ENCODE measurements at regions of chr7 and their contacts with region 1.

Region 1: GRCh38 chr7:91832493-91833045 is 47.9 kb downstream of the MTERF1 start:
- DNase-seq: no peak
- H3K4me3 ChIP-seq: no peak overlapping the region
- H3K4me3 Mint-ChIP-seq: no peak overlapping the region
- H3K27ac ChIP-seq: no peak overlapping the region
- H3K27ac Mint-ChIP-seq: no peak overlapping the region
- H3K4me1 ChIP-seq: peaks cover 10 to 13% of the 10 kb centered on the region in 2 donors
- H3K4me1 Mint-ChIP-seq: peaks cover 12% of the 10 kb centered on the region
- H3K27me3 ChIP-seq: no peaks in the 10 kb centered on the region
- H3K27me3 Mint-ChIP-seq: peaks cover 0 to 4% (median 1%) of the 10 kb centered on the region in 3 donors
- CTCF ChIP-seq: no peak

Region 2: DNA sequence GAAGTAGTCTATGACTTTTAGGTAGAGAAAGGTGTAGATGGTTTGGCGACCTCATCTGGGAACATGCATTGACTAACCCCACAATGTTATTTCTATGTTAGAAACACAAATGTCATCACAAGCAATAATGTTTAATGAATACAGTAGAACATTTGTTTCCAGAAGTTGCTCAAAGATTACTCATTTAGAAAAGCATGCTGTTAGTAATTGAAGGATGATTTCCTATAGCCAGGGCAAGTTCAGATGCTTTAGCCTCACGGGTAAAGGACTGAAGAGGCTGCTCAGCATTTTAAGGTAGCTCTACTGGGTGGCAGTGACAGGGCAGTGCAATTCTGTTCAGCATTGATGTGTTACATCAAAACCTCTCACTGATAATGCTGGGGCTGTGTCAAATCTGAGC is 767.6 kb before region 1 on chr7:
- intact Hi-C with region 1: no loop called
- DNase-seq: no peak
- H3K4me3 ChIP-seq: no peak overlapping the region
- H3K4me3 Mint-ChIP-seq: no peak overlapping the region
- H3K27ac ChIP-seq: no peak overlapping the region
- H3K27ac Mint-ChIP-seq: no peak overlapping the region
- H3K4me1 ChIP-seq: no peaks in the 10 kb centered on the region
- H3K4me1 Mint-ChIP-seq: no peaks in the 10 kb centered on the region
- H3K27me3 ChIP-seq: no peaks in the 10 kb centered on the region
- H3K27me3 Mint-ChIP-seq: no peaks in the 10 kb centered on the region
- CTCF ChIP-seq: no peak

Region 3: GRCh38 chr7:91569728-91570457 is 262.7 kb before region 1 on chr7:
- intact Hi-C with region 1: no loop called
- DNase-seq: no peak
- H3K4me3 ChIP-seq: no peak overlapping the region
- H3K4me3 Mint-ChIP-seq: no peak overlapping the region
- H3K27ac ChIP-seq: no peak overlapping the region
- H3K27ac Mint-ChIP-seq: no peak overlapping the region
- H3K4me1 ChIP-seq: no peaks in the 10 kb centered on the region
- H3K4me1 Mint-ChIP-seq: no peaks in the 10 kb centered on the region
- H3K27me3 ChIP-seq: peaks cover 0 to 2% of the 10 kb centered on the region in 2 donors
- H3K27me3 Mint-ChIP-seq: peaks cover 5 to 9% (median 6%) of the 10 kb centered on the region in 3 donors
- CTCF ChIP-seq: no peak

Region 4: DNA sequence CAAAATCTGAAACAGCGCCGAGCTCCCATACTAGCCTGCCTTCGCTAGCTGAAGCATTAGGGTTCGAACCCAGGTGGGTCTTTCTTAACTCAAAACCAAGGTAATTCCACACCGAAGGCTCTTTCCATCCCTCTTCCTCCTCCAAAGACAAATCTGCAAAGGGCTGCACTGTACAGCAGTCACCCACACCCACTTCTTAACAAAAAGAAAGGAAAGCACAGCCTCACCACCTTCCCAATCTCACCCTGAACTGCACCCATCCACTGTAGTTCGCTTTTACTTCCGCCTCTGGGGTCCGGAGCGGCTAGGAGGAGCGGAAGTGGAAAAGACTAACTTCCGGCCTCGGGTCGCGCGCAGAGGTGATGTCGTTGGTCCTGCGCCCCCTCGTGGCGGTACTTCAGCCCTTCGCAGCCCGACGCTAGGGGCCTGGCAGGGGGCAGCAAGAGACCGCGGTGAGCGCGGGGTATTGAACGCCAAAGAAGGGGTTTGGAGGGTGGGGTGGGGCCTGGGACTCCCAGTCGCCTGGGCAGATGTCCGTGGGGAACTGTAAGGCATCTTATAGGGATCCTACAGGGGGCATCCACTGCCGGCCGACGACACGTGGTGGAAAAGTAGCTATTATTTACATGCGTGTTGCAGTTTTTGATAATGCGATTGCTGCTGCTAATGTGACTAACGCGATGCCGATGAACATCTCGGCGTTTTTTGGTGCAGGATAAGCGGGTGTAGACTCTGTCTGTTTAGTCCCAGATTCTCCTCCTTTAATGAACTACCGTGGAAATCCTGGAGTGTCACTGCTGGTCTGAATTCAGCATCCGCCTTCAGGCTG is 48.1 kb after region 1 on chr7 and contains the start of gene MTERF1:
- intact Hi-C with region 1: loop called in 1 of 2 experiments (anchors 5 kb)
- DNase-seq: peak; percentile 88 to 92 (median 92)
- H3K4me3 ChIP-seq: peak within 1 kb of the TSS; percentile 67 to 97 (median 93)
- H3K4me3 Mint-ChIP-seq: peak within 1 kb of the TSS; percentile 90 to 99
- H3K27ac ChIP-seq: peak within 1 kb of the TSS; percentile 5 to 83
- H3K27ac Mint-ChIP-seq: peak within 1 kb of the TSS; percentile 83 to 95 (median 93)
- H3K4me1 ChIP-seq: peaks cover 15 to 26% of the 10 kb centered on the region in 2 donors
- H3K4me1 Mint-ChIP-seq: peaks cover 31% of the 10 kb centered on the region
- H3K27me3 ChIP-seq: no peaks in the 10 kb centered on the region
- H3K27me3 Mint-ChIP-seq: peaks cover 0 to 8% (median 5%) of the 10 kb centered on the region in 3 donors
- CTCF ChIP-seq: peak; percentile 90
- polyA plus RNA-seq, gene MTERF1: 3.6 to 4.6 (median 4.0) TPM

Measured in CD14-positive monocyte (primary cell).